CD4-positive, alpha-beta T cell (primary cell): ENCODE measurements at regions of chr2 and their contacts with region 1.

Region 1: GRCh38 chr2:10812362-10813162 is at the start of gene PDIA6:
- DNase-seq: peak; percentile 89 to 96 (median 92)
- ATAC-seq: peak; percentile 90
- H3K4me3 ChIP-seq: peak within 1 kb of the TSS; percentile 70
- H3K4me3 Mint-ChIP-seq: peak within 1 kb of the TSS; percentile 93
- H3K27ac ChIP-seq: peak within 1 kb of the TSS in 1 of 2 donors; percentile 31
- H3K27ac Mint-ChIP-seq: peak within 1 kb of the TSS; percentile 90
- H3K4me1 ChIP-seq: peaks cover 32% of the 10 kb centered on the region
- H3K4me1 Mint-ChIP-seq: peaks cover 34% of the 10 kb centered on the region
- H3K27me3 ChIP-seq: no peaks in the 10 kb centered on the region
- H3K27me3 Mint-ChIP-seq: peaks cover 2% of the 10 kb centered on the region
- CTCF ChIP-seq: no peak
- total RNA-seq, gene PDIA6: 25.5 to 26.3 TPM

Region 2: DNA sequence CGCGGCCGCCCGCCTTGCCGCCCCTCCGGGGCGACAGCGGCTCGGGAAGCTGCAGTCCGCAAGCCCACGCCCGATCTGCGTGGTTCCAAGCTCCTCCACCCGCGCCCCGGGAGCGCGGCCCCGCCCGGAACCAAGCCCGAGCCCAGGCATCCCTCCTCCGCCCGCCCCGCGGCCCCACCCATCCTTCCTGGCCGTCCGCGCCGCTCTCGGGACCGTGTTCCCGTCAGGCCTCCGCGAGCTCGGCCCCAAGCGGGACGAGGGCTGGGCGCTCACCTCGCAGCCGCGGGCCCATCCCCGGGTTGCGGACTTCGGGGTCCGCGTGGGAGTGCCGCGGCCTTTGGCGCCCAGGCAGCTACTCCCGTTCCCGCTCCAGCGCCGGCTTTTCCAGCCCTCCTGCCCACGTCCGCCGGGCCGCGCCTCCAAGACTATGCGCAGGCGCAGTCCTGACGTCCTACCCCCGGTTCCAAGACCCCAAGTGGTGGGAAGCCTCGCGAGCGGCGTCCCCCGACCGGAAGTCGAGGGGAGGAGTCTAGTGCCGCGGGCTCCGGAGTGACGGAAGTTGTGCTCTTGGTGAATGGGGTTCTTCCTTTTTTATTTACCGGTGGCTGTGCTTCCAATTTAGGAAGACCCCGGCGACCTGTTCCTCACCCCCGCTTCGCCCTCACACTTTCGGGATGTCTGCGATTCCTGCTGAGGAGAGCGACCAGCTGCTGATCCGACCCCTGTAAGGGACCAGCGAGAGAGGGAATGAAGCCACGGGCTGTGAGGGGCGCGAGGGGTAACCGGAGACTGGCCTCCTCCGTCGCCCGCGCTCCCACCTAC is 1389.3 kb before region 1 on chr2 and contains the starts of genes CPSF3 and ITGB1BP1:
- CTCF ChIA-PET with region 1: no interaction called
- POLR2A ChIA-PET with region 1: no interaction called
- intact Hi-C with region 1: loop called in 1 of 2 experiments (anchors 10 kb)
- DNase-seq: peak; percentile 87 to 98 (median 94)
- ATAC-seq: peak; percentile 84
- H3K4me3 ChIP-seq: peak within 1 kb of the TSS; percentile 99
- H3K4me3 Mint-ChIP-seq: peak within 1 kb of the TSS; percentile 94
- H3K27ac ChIP-seq: peak within 1 kb of the TSS; percentile 73 to 84
- H3K27ac Mint-ChIP-seq: no peak within 1 kb of the TSS
- H3K4me1 ChIP-seq: peaks cover 39% of the 10 kb centered on the region
- H3K4me1 Mint-ChIP-seq: peaks cover 35% of the 10 kb centered on the region
- H3K27me3 ChIP-seq: no peaks in the 10 kb centered on the region
- H3K27me3 Mint-ChIP-seq: no peaks in the 10 kb centered on the region
- CTCF ChIP-seq: no peak
- total RNA-seq, gene CPSF3: 13.2 to 13.8 TPM
- total RNA-seq, gene ITGB1BP1: 24.4 to 25.0 TPM

Region 3: DNA sequence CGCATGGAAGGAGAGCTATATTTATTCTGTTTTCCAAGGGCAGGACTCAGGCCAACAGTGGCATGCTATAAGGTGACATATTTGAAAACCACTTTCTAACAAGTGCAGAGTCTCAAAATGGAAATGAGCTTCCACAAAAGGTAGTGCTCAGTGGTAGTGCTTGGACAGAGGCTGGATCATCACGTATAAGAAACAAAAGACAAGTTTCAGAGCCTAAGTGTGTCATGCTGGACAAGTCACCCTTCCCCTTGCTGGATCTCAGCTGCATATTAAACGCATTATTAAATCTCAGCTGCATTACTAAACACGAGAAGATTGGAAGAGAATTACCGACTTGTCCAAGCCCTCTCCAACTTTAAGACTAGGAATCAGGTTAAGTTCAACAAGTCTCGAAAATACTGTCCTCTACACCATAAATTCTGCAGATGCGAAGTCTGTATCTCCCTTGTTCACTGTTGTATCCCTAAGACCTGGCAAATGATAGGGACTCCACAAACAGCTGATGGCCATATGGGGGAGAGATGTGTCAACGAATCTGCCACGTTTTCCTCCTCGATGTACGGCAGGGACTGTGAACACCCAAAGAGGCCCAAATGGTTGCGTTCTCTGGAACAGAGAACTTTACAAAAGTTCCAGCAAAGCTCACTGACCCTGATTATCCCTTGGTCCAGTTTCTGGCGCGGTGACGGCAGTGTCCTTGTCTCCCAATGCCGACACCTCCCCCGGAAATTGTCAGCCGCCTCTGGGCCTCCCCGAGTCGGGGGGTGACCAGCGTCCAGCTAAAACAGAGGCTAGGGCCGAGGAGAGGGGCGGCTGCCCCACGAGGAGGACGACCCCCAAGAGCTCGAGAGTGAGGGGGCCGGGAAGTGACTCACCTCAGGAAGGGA is 123.4 kb before region 1 on chr2:
- CTCF ChIA-PET with region 1: no interaction called
- POLR2A ChIA-PET with region 1: no interaction called
- intact Hi-C with region 1: loop called in 1 of 2 experiments (anchors 2 kb)
- DNase-seq: peak in 3 of 14 experiments; percentile 3 to 9 (median 7)
- ATAC-seq: peak; percentile 16
- H3K4me3 ChIP-seq: peak overlapping the region; percentile 91
- H3K4me3 Mint-ChIP-seq: no peak overlapping the region
- H3K27ac ChIP-seq: peak overlapping the region; percentile 88 to 89
- H3K27ac Mint-ChIP-seq: no peak overlapping the region
- H3K4me1 ChIP-seq: peaks cover 30% of the 10 kb centered on the region
- H3K4me1 Mint-ChIP-seq: peaks cover 12% of the 10 kb centered on the region
- H3K27me3 ChIP-seq: no peaks in the 10 kb centered on the region
- H3K27me3 Mint-ChIP-seq: no peaks in the 10 kb centered on the region
- CTCF ChIP-seq: no peak

Region 4: DNA sequence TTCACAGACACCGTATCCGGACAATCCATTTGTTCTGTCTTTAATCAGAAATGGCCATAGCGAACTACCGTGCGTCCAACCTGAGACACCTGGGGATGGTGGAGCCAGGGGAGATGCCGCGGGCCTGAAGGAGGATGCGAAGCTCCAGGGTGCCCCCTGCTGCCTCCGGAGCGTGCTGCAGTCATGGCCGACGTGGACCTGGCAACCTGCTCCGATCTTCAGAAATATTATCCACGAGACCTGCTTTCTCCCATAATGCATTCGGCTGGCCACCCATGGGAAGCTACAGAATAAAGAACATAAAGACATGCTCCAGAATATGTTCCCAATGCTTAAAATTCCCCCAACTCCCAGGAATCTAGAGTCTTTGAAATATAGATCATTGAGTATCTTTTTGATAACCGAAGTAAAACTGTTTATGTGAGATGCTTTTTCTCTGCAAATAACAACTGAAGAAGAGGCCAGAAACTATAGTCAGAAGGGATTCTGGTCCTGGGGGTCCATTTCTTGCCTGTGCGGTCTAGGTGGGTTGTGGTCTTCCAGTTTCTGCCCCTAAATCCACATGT is 312.0 kb after region 1 on chr2:
- CTCF ChIA-PET with region 1: interaction called, 4 read pairs
- POLR2A ChIA-PET with region 1: interaction called, 11 read pairs
- intact Hi-C with region 1: loop called in 1 of 2 experiments (anchors 5 kb)
- DNase-seq: peak; percentile 36 to 79 (median 56)
- ATAC-seq: peak; percentile 89
- H3K4me3 ChIP-seq: no peak overlapping the region
- H3K4me3 Mint-ChIP-seq: no peak overlapping the region
- H3K27ac ChIP-seq: no peak overlapping the region
- H3K27ac Mint-ChIP-seq: no peak overlapping the region
- H3K4me1 ChIP-seq: peaks cover 21% of the 10 kb centered on the region
- H3K4me1 Mint-ChIP-seq: peaks cover 22% of the 10 kb centered on the region
- H3K27me3 ChIP-seq: no peaks in the 10 kb centered on the region
- H3K27me3 Mint-ChIP-seq: no peaks in the 10 kb centered on the region
- CTCF ChIP-seq: peak; percentile 30

Region 5: GRCh38 chr2:11344342-11344955 is 531.9 kb after region 1 on chr2 and contains the start of gene ROCK2:
- CTCF ChIA-PET with region 1: no interaction called
- POLR2A ChIA-PET with region 1: interaction called, 10 read pairs
- intact Hi-C with region 1: loop called in 1 of 2 experiments (anchors 10 kb)
- DNase-seq: peak; percentile 42 to 83 (median 59)
- ATAC-seq: peak; percentile 68
- H3K4me3 ChIP-seq: peak within 1 kb of the TSS; percentile 88
- H3K4me3 Mint-ChIP-seq: peak within 1 kb of the TSS; percentile 98
- H3K27ac ChIP-seq: peak within 1 kb of the TSS; percentile 7 to 42
- H3K27ac Mint-ChIP-seq: peak within 1 kb of the TSS; percentile 88
- H3K4me1 ChIP-seq: peaks cover 16% of the 10 kb centered on the region
- H3K4me1 Mint-ChIP-seq: peaks cover 44% of the 10 kb centered on the region
- H3K27me3 ChIP-seq: no peaks in the 10 kb centered on the region
- H3K27me3 Mint-ChIP-seq: no peaks in the 10 kb centered on the region
- CTCF ChIP-seq: no peak
- total RNA-seq, gene ROCK2: 6.9 to 9.4 TPM